Naive thymus-derived CD4-positive, alpha-beta T cell (primary cell): ENCODE measurements at regions of chr17 and their contacts with region 1.

Region 1: GRCh38 chr17:39794249-39794970 is 56.7 kb downstream of the GRB7 start:
- DNase-seq: peak in 7 of 9 donors; percentile 28 to 67 (median 44)
- ATAC-seq: peak; percentile 83
- H3K4me3 ChIP-seq: peak overlapping the region; percentile 2
- H3K4me3 Mint-ChIP-seq: peak overlapping the region; percentile 37 to 82 (median 76)
- H3K27ac ChIP-seq: peak overlapping the region; percentile 65
- H3K27ac Mint-ChIP-seq: peak overlapping the region; percentile 86 to 96 (median 93)
- H3K4me1 ChIP-seq: peaks cover 56 to 66% of the 10 kb centered on the region in 2 donors
- H3K4me1 Mint-ChIP-seq: peaks cover 49 to 86% (median 82%) of the 10 kb centered on the region in 7 donors
- H3K27me3 ChIP-seq: no peaks in the 10 kb centered on the region
- H3K27me3 Mint-ChIP-seq: no peaks in the 10 kb centered on the region

Region 2: DNA sequence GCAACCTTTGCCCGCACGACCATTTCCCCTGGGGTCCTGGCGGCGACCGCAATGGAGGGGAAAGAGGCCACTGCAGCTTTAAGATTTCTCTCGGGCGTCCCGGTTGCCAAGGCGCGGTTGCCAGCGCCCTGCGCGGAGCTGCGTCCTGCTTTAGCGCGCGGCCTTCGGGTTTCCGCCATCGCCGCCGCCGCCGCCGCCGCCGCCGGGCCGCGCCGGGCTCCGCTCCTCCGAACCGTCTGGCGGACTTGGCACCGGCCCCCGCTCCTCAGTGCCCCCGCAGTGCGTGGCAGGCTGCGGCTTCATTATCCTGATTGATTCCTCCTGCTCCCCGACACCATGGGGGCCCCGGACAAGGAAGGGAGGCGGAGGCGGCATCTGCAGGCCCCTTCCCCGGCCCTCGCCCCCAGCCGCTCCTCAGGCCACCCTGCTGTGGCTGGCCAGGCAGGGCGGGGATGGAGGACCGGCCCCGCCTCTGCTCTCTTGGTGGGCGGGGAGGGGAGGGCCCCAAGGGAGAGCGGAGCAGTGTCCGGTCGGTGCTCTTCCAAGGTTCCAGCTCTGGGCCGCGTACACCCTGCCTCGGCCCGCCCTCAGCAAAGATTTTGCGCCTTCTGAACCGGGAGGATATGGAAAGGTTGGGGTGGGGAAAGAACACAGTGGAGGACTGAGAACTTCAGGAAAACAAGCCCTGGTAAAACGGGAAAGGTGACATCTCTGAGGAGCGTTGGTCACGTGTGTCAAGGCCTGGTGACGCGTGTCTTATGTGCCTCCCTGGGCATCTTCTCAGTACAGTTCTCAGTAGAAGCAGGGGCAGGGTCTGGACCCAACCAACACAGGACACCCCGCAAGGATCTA is 220.7 kb before region 1 on chr17:
- CTCF ChIA-PET with region 1: no interaction called
- POLR2A ChIA-PET with region 1: no interaction called
- intact Hi-C with region 1: no loop called
- DNase-seq: peak in 5 of 9 donors; percentile 16 to 45 (median 23)
- ATAC-seq: peak; percentile 48
- H3K4me3 ChIP-seq: no peak overlapping the region
- H3K4me3 Mint-ChIP-seq: peak overlapping the region; percentile 76 to 93 (median 82)
- H3K27ac ChIP-seq: no peak overlapping the region
- H3K27ac Mint-ChIP-seq: peak overlapping the region in 4 of 9 donors; percentile 18 to 78 (median 50)
- H3K4me1 ChIP-seq: no peaks in the 10 kb centered on the region
- H3K4me1 Mint-ChIP-seq: peaks cover 0 to 9% (median 7%) of the 10 kb centered on the region in 7 donors
- H3K27me3 ChIP-seq: no peaks in the 10 kb centered on the region
- H3K27me3 Mint-ChIP-seq: peaks cover 0 to 28% (median 5%) of the 10 kb centered on the region in 5 donors

Region 3: DNA sequence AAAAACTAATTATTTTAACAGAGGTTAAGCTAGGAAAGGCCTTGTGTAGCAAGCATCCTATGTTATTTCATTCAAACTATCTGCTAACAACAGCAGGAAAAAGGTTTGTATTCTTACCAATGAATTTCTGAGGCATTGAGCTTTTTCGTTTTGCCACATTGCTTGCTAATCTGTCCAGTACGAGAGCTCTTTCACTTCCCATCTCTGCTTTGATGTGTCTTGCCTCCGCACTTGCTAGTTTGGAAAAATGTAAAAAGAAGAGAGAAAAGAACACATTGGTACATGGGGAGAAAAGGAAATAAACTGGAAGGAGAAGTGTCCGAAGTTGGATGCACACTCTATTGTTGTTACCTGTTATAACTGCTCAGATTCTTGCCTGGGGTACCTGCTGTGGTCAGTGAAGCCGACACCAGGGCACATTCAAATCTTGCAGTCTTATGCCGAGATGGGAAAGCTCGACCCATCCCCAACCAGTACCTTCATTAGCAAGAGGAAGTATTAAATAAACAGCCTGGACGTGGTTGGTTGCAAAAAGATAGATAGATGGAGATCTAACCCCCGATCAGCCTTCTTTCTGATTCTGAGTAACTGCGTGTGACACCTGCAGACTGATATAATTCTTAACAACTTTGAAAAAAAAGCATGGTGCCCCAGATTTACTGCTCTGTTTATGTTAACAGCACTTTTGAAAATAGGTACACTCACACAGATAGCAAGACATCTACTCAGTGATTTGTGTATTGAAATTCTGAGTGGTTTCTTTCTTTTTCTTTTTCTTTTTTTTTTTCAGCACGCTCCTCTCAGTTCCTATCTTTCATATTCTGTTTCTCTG is 16.7 kb before region 1 on chr17:
- CTCF ChIA-PET with region 1: interaction called, 5 read pairs
- POLR2A ChIA-PET with region 1: interaction called, 48 read pairs
- intact Hi-C with region 1: loop called (anchors 1 to 2 kb)
- DNase-seq: peak in 1 of 9 donors; percentile 40
- ATAC-seq: peak; percentile 72
- H3K4me3 ChIP-seq: peak overlapping the region; percentile 74
- H3K4me3 Mint-ChIP-seq: peak overlapping the region; percentile 79 to 95 (median 90)
- H3K27ac ChIP-seq: peak overlapping the region; percentile 77
- H3K27ac Mint-ChIP-seq: peak overlapping the region; percentile 68 to 98 (median 94)
- H3K4me1 ChIP-seq: peaks cover 61 to 75% of the 10 kb centered on the region in 2 donors
- H3K4me1 Mint-ChIP-seq: peaks cover 60 to 91% (median 86%) of the 10 kb centered on the region in 7 donors
- H3K27me3 ChIP-seq: no peaks in the 10 kb centered on the region
- H3K27me3 Mint-ChIP-seq: no peaks in the 10 kb centered on the region

Region 4: GRCh38 chr17:39808409-39808997 is 14.1 kb after region 1 on chr17:
- CTCF ChIA-PET with region 1: interaction called, 10 read pairs
- POLR2A ChIA-PET with region 1: interaction called, 41 read pairs
- intact Hi-C with region 1: loop called in 1 of 2 experiments (anchors 1 kb)
- DNase-seq: no peak
- ATAC-seq: no peak
- H3K4me3 ChIP-seq: no peak overlapping the region
- H3K4me3 Mint-ChIP-seq: peak overlapping the region in 1 of 10 donors; percentile 27
- H3K27ac ChIP-seq: no peak overlapping the region
- H3K27ac Mint-ChIP-seq: peak overlapping the region in 4 of 9 donors; percentile 51 to 94 (median 60)
- H3K4me1 ChIP-seq: peaks cover 13 to 38% of the 10 kb centered on the region in 2 donors
- H3K4me1 Mint-ChIP-seq: peaks cover 38 to 87% (median 81%) of the 10 kb centered on the region in 7 donors
- H3K27me3 ChIP-seq: no peaks in the 10 kb centered on the region
- H3K27me3 Mint-ChIP-seq: no peaks in the 10 kb centered on the region

Region 5: DNA sequence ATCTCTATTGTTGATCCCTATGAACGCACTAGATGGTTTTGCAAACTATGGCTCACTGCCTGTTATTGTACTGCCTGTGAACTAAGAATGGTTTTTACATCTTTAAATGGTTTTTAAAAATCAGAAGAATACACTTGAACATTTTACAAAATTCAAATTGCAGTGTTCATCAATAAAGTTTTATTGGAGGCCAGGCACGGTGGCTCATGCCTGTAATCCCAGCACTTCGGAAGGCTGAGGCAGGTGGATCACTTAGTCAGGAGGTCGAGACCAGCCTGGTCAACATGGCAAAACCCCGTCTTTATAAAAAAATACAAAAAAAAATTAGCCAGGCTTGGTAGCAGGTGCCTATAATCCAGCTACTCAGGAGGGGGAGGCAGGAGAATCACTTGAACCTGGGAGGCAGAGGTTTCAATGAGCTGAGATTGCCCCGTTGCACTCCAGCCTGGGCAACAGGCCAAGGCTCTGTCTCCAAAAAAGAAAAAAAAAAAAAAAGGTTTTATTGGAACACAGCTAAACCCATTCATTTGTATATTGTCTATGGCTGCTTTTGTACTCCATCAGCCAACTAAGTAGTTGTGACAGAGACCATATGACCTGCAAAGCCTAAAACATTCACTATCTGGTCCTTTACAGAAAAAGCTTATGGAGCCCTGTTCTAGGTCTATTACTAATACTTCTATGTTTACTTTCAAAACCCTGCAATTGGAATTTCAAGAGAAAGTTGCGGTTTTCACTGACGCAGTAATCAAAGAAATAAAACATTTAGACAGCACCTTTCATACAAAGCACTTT is 50.8 kb after region 1 on chr17:
- CTCF ChIA-PET with region 1: interaction called, 3 read pairs
- POLR2A ChIA-PET with region 1: interaction called, 4 read pairs
- intact Hi-C with region 1: loop called in 1 of 2 experiments (anchors 2 kb)
- DNase-seq: no peak
- ATAC-seq: no peak
- H3K4me3 ChIP-seq: no peak overlapping the region
- H3K4me3 Mint-ChIP-seq: peak overlapping the region in 3 of 10 donors; percentile 2 to 30 (median 12)
- H3K27ac ChIP-seq: peak overlapping the region; percentile 57
- H3K27ac Mint-ChIP-seq: peak overlapping the region in 8 of 9 donors; percentile 68 to 94 (median 87)
- H3K4me1 ChIP-seq: peaks cover 32 to 36% of the 10 kb centered on the region in 2 donors
- H3K4me1 Mint-ChIP-seq: peaks cover 38 to 94% (median 83%) of the 10 kb centered on the region in 7 donors
- H3K27me3 ChIP-seq: no peaks in the 10 kb centered on the region
- H3K27me3 Mint-ChIP-seq: no peaks in the 10 kb centered on the region